A673 (cell line): ENCODE measurements at regions of chrX and their contacts with region 1.

Region 1: DNA sequence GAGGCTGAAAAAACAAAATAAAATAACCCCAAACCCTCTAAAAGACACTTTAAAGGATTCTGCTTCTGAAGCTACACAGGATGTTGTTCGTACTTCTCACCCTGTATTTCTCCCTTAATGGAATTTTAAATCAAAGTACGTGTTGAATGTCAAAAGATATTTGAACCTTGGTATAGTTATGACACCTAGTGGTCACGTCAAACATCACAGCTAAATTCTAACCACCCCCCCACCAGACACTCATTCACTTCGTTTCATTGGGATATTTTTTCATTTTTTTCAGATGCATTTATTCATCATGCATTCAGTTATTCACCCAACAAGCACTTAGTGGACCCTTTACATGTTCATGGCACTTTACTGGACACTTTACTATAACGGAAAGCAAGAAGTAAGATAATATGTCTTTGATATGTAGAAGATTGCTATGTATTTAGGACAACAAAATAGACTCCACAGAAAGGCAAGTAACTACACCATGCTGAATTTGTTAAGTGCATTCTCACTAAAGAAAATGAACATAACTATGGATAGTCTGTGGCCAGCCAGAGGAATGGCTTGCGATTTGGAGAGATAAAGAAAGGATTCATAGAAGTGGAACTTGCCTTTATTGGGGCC is 62.5 kb upstream of the GPR174 start:
- DNase-seq: peak; percentile 86
- H3K4me3 ChIP-seq: no peak overlapping the region
- H3K27ac ChIP-seq: peak overlapping the region; percentile 83
- H3K4me1 ChIP-seq: peaks cover 27% of the 10 kb centered on the region
- H3K27me3 ChIP-seq: no peaks in the 10 kb centered on the region
- CTCF ChIP-seq: peak; percentile 75

Region 2: DNA sequence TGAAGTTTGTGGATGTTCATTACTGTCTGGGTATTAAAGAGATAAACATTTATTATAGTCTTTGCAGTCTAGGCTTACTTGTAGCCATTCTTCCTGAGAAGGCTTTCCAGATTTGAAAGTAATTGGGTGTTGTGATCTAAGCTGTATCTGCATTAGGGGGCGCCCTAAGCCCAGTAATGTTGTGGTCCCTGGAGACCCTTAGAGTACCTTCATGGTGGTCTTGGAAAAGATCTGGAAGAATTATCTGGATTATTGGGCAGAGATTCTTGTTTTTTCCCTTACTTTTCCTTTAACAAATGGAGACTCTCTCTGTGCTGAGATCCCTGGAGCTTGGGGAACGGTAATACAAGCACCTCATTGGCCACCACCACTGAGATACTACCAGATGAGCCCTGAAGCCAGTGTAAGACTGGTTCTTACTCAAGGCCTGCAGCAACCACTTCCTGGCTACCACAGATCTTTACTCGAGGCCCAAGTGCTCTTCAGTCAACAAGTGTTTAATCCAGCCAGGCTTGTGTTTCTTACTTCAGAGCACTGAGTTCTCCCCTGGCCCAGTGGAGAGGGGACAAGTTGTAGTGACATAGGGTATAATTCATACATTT is 486.0 kb before region 1 on chrX:
- CTCF ChIA-PET with region 1: interaction called, 4 read pairs
- POLR2A ChIA-PET with region 1: no interaction called
- intact Hi-C with region 1: loop called (anchors 5 kb)
- DNase-seq: peak; percentile 54
- H3K4me3 ChIP-seq: no peak overlapping the region
- H3K27ac ChIP-seq: no peak overlapping the region
- H3K4me1 ChIP-seq: no peaks in the 10 kb centered on the region
- H3K27me3 ChIP-seq: no peaks in the 10 kb centered on the region
- CTCF ChIP-seq: peak; percentile 54

Region 3: GRCh38 chrX:78658845-78659744 is 422.9 kb before region 1 on chrX and contains the start of gene RTL3:
- CTCF ChIA-PET with region 1: no interaction called
- POLR2A ChIA-PET with region 1: no interaction called
- intact Hi-C with region 1: no loop called
- DNase-seq: no peak
- H3K4me3 ChIP-seq: no peak within 1 kb of the TSS
- H3K27ac ChIP-seq: no peak within 1 kb of the TSS
- H3K4me1 ChIP-seq: no peaks in the 10 kb centered on the region
- H3K27me3 ChIP-seq: no peaks in the 10 kb centered on the region
- CTCF ChIP-seq: no peak
- total RNA-seq, gene RTL3: not detected in 2 replicates

Region 4: GRCh38 chrX:78747489-78747888 is 334.5 kb before region 1 on chrX and contains the start of gene LPAR4:
- CTCF ChIA-PET with region 1: no interaction called
- POLR2A ChIA-PET with region 1: no interaction called
- intact Hi-C with region 1: loop called (anchors 10 kb)
- DNase-seq: peak; percentile 75
- H3K4me3 ChIP-seq: peak within 1 kb of the TSS; percentile 46
- H3K27ac ChIP-seq: peak within 1 kb of the TSS; percentile 59
- H3K4me1 ChIP-seq: peaks cover 9% of the 10 kb centered on the region
- H3K27me3 ChIP-seq: no peaks in the 10 kb centered on the region
- CTCF ChIP-seq: no peak
- total RNA-seq, gene LPAR4: 7.1 and 7.2 TPM in 2 replicates

Region 5: GRCh38 chrX:78886550-78886949 is 195.5 kb before region 1 on chrX:
- CTCF ChIA-PET with region 1: interaction called, 3 read pairs
- POLR2A ChIA-PET with region 1: no interaction called
- intact Hi-C with region 1: loop called (anchors 2 kb)
- DNase-seq: peak; percentile 68
- H3K4me3 ChIP-seq: no peak overlapping the region
- H3K27ac ChIP-seq: no peak overlapping the region
- H3K4me1 ChIP-seq: no peaks in the 10 kb centered on the region
- H3K27me3 ChIP-seq: no peaks in the 10 kb centered on the region
- CTCF ChIP-seq: peak; percentile 62

Region 6: GRCh38 chrX:79182616-79183015 is 100.6 kb after region 1 on chrX:
- CTCF ChIA-PET with region 1: no interaction called
- POLR2A ChIA-PET with region 1: no interaction called
- intact Hi-C with region 1: no loop called
- DNase-seq: no peak
- H3K4me3 ChIP-seq: no peak overlapping the region
- H3K27ac ChIP-seq: peak overlapping the region; percentile 4
- H3K4me1 ChIP-seq: no peaks in the 10 kb centered on the region
- H3K27me3 ChIP-seq: no peaks in the 10 kb centered on the region
- CTCF ChIP-seq: no peak

Region 7: DNA sequence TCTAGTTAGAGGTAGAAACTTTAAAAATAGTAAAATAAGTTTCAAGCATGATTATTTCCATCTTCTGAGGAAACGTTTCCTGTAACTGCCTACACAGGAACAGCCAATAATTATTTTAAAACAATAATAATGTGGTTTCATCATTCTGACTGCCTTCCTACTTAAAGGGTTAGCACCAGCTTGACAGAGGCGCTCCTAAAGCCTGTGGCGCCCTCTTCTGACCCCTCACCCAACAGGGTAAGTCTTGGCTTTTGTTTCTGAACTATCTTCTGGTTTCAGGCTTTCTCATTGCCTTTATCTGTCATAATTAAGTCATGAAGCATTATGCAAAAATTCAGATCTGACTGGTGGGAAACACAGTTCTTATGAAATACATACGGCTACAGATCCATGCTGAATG is 188.4 kb after region 1 on chrX:
- CTCF ChIA-PET with region 1: no interaction called
- POLR2A ChIA-PET with region 1: no interaction called
- intact Hi-C with region 1: loop called (anchors 5 kb)
- DNase-seq: peak; percentile 92
- H3K4me3 ChIP-seq: no peak overlapping the region
- H3K27ac ChIP-seq: peak overlapping the region; percentile 90
- H3K4me1 ChIP-seq: peaks cover 50% of the 10 kb centered on the region
- H3K27me3 ChIP-seq: no peaks in the 10 kb centered on the region
- CTCF ChIP-seq: peak; percentile 78

Region 8: GRCh38 chrX:79288733-79289132 is 206.7 kb after region 1 on chrX:
- CTCF ChIA-PET with region 1: no interaction called
- POLR2A ChIA-PET with region 1: no interaction called
- intact Hi-C with region 1: no loop called
- DNase-seq: no peak
- H3K4me3 ChIP-seq: no peak overlapping the region
- H3K27ac ChIP-seq: no peak overlapping the region
- H3K4me1 ChIP-seq: no peaks in the 10 kb centered on the region
- H3K27me3 ChIP-seq: no peaks in the 10 kb centered on the region
- CTCF ChIP-seq: no peak

Region 9: DNA sequence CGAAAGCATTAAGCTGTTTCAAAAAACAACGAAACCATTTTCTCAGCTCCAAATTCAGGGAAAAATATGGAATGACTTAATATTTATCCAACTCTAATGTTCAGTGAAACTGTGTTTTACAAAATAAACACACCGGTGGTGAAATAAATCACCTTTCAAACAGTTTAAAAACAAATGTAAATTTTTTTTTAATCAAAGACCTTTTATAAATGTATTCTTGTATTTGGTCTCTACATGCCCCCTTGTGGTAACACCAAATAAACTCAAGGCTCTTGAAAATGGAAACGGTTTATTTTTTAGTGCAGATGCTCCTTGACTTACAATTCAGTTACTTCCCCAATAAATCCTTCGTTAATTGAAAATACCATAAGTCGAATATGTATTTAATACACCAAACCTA is 331.0 kb after region 1 on chrX:
- CTCF ChIA-PET with region 1: no interaction called
- POLR2A ChIA-PET with region 1: no interaction called
- intact Hi-C with region 1: loop called (anchors 5 kb)
- DNase-seq: peak; percentile 73
- H3K4me3 ChIP-seq: peak overlapping the region; percentile 29
- H3K27ac ChIP-seq: peak overlapping the region; percentile 64
- H3K4me1 ChIP-seq: peaks cover 40% of the 10 kb centered on the region
- H3K27me3 ChIP-seq: no peaks in the 10 kb centered on the region
- CTCF ChIP-seq: peak; percentile 65